ENCODE measurements at regions of chr5 and their contacts with region 1.

Region 1: DNA sequence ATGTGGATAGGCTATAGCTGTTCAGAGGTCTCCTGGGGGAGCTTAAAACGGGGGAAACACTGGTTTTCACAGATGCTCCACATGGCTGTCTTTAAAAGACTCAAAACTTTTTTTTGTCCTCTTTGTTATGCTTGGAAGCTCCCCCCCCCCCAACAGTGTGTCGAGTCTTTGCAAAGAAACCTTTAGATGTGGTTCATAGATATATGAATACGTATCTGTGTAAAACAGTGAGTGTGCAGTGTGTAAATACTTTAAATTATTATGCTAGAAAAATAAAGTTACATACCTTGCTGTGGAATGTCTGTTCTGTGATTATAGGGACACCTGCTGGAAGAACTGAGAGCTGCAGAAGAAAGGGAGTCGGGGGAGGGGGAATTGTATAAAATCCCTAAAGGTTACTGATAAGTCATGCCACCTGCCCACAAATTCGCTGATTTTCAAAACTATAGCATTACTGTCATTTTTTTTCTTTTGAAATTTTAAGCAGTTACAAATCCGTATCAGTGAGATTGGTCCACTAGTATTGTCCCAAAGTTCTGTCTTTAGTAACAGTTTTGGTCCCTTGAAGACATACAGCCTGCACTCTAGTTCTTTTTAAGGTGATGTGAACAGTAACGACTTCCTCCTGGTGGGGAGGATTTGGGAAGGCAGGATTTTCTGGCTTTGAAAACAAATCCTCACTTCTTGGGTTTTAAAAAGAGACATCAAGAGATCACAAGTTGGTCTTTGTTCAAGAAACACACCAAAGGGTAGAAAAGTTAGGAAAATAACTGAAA is 22.9 kb downstream of the RGMB start:
- H3K4me3 ChIP-seq: no peak overlapping the region
- H3K27ac ChIP-seq: no peak overlapping the region
- H3K4me1 ChIP-seq: peaks cover 2% of the 10 kb centered on the region; the same call in 1 of the 2 replicates
- CTCF ChIP-seq: peak; percentile 19; the same call in 1 of the 2 replicates

Region 2: GRCh38 chr5:97044052-97044451 is 1752.3 kb before region 1 on chr5:
- CTCF ChIA-PET with region 1: interaction called, 10 read pairs
- POLR2A ChIA-PET with region 1: no interaction called
- H3K4me3 ChIP-seq: no peak overlapping the region
- H3K27ac ChIP-seq: no peak overlapping the region
- H3K4me1 ChIP-seq: no peaks in the 10 kb centered on the region
- CTCF ChIP-seq: no peak

Region 3: DNA sequence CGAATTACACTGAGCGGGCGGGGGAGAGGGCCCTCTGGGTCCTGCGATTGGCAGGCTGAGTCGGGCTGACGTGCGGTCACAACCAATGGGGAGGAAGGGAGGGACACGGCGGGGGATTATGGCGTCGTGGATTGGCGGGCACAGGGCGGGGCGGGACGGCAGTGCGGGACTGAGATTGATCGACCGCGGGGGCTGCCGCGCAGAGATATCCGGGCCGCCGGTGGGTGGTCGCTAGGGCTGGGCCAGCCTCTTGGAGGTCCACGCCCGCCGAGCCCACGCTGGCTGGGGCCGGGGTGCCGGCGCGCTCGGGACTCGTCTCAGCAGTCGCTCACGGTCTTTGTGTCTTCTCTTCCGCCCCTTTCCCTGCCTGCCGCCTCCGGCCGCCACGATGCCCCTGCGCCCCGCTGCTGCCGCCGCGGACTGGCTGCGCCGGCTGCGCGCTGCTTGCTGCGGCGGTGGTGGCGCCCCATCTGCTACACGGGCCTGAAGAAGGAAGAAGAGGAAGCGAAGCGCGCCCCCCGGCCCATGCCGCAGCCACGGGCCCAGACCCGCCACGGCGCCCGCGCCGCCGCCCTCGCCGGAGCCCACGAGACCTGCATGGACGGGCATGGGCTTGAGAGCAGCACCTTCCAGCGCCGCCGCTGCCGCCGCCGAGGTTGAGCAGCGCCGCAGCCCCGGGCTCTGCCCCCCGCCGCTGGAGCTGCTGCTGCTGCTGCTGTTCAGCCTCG is 22.8 kb before region 1 on chr5 and contains the start of gene RGMB:
- CTCF ChIA-PET with region 1: interaction called, 64 read pairs
- POLR2A ChIA-PET with region 1: interaction called, 9 read pairs
- H3K4me3 ChIP-seq: peak within 1 kb of the TSS; percentile 79
- H3K27ac ChIP-seq: peak within 1 kb of the TSS; percentile 97
- H3K4me1 ChIP-seq: peaks cover 24% of the 10 kb centered on the region
- CTCF ChIP-seq: no peak